ENCODE measurements at regions of chr10 and their contacts with region 1.

Region 1: GRCh38 chr10:53093878-53094277 is 321.3 kb upstream of the MBL2 start:
- DNase-seq: no peak
- H3K4me3 Mint-ChIP-seq: no peak overlapping the region
- H3K27ac Mint-ChIP-seq: no peak overlapping the region
- H3K4me1 Mint-ChIP-seq: no peaks in the 10 kb centered on the region
- H3K27me3 Mint-ChIP-seq: no peaks in the 10 kb centered on the region
- CTCF ChIP-seq: no peak

Region 2: GRCh38 chr10:53754596-53755250 is 660.8 kb after region 1 on chr10:
- CTCF ChIA-PET with region 1: interaction called, 13 read pairs
- intact Hi-C with region 1: no loop called
- DNase-seq: peak; percentile 1
- H3K4me3 Mint-ChIP-seq: no peak overlapping the region
- H3K27ac Mint-ChIP-seq: no peak overlapping the region
- H3K4me1 Mint-ChIP-seq: no peaks in the 10 kb centered on the region
- H3K27me3 Mint-ChIP-seq: no peaks in the 10 kb centered on the region
- CTCF ChIP-seq: no peak

Measured in Calu3 (cell line).